AG04450 (cell line): ENCODE measurements at regions of chr7 and their contacts with region 1.

Region 1: DNA sequence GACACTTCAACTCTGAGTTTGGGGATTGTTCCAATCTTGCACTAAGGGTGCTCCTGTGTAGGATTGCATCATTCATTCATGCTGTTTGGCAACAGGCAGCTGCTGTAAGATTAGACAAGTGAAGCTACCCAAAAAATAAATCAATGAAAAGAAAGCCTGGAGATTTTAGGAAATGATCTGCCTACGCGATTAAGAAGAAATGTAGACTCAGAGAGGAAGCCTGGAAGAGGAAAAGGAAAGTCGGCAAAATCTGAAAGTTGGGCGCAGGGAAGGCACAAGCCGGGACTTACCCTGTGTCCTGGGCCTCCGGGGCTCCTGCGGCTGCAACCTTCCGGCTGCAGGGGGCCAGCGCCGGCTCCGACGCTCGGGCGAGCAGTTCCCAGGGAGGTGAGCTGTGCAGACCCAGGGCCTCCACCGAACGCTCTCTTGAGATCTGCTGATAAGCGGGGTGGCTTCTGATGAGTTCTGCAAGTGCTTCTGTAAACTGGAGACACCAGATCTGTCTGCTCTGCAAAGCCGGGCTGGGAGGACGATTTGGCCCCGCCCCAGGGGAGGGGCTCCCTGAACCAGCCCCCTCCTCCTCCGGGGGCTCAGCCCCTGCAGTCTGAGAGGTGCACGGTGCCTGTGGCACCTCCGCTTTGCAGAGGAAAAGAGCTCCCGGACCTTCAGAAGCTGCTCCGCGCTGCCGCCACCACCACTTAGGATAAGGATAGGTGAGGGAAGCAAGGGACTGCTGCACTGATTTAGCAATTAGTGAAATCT is 17.4 kb downstream of the PSPH start:
- DNase-seq: no peak
- H3K4me3 ChIP-seq: peak overlapping the region; percentile 73
- H3K27ac ChIP-seq: peak overlapping the region; percentile 66
- H3K27me3 ChIP-seq: no peaks in the 10 kb centered on the region
- CTCF ChIP-seq: peak; percentile 42

Region 2: DNA sequence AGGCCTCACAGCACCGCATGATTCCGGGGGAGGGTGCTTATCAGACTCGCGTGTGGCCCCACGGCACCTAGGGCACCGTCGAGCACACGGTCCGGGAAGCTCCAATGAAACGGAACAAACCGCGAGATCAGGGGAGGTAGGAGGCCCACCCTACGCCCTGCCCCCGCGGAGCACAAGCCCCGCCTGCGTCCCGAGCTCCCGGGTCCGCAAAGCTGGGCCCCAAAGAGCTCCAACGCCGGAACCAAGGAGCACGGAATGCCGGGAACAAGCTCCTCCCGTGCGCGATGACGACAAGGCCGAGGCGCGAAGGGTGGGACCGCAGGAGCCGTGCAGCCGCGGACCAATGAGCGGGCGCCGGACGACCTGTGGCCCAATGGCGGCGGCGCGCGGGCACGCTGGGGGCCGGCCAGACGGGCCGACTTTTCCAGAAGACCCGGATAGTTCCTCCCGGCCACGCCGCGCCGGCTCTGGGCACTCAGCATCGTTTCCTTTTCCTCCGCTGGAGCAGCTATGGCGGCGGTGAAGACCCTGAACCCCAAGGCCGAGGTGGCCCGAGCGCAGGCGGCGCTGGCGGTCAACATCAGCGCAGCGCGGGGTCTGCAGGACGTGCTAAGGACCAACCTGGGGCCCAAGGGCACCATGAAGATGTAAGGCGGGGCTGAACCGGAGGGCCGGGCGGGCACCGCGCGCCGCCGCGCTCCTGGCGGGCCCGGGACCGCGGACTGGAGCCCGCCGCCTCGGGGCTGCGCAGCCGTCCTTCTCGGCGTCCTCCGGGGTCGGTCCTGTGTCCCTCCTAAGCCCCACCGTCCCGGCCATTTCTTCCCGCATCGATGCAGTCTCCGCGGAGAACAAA is 17.7 kb after region 1 on chr7 and contains the starts of genes CCT6A and PSPH:
- CTCF ChIA-PET with region 1: no interaction called
- POLR2A ChIA-PET with region 1: interaction called, 17 read pairs
- DNase-seq: peak; percentile 97
- H3K4me3 ChIP-seq: peak within 1 kb of the TSS; percentile 93
- H3K27ac ChIP-seq: peak within 1 kb of the TSS; percentile 87
- H3K27me3 ChIP-seq: no peaks in the 10 kb centered on the region
- CTCF ChIP-seq: no peak
- polyA plus RNA-seq, gene CCT6A: 214 and 302 TPM in 2 replicates
- polyA plus RNA-seq, gene PSPH: 66.0 and 66.4 TPM in 2 replicates